ENCODE measurements at regions of chr22 and their contacts with region 1.

Region 1: DNA sequence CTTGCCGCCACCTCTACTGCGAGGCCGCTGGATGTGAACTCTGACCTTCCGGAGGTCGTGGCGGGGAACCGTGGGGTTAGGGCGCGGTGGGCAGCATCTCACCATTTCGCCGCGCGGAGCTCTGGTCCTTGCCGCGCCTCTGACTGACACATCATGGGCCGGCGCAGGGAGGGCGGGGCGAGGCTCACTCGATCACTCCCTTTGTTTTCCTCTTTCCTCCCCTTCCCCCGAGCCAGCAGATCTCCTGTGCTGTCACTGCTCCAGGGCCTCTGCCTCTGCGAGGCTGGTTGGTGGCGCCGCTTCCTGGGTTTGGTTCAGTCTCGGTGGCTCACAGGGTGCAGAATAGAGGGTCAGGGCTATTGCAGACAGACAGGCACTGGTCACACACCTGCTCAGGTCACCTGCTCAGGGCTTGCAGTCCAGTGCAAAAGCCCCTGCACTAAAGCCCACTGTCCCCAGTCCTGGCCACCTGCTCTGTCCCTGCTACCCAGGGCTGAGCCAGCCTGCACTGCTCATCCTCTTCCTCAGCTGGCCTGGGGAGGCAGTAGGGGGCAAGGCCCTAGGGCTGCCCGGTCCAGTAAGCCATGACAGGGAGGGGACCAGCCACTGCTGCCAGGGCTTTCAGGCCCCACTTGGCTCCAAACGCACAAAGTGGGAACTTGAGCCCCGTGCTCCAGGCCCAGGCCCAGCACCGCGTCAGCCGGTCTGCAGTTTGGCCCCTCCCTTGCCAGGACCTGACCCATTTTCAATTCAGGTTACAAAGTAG is 36.2 kb downstream of the PISD start:
- DNase-seq: peak in 1 of 6 donors; percentile 63
- ATAC-seq: peak in 1 of 4 donors; percentile 3
- H3K4me3 ChIP-seq: no peak overlapping the region
- H3K27ac ChIP-seq: peak overlapping the region in 1 of 4 donors; percentile 17
- H3K4me1 ChIP-seq: peaks cover 4 to 20% (median 17%) of the 10 kb centered on the region in 3 donors
- H3K27me3 ChIP-seq: no peaks in the 10 kb centered on the region
- CTCF ChIP-seq: no peak

Region 2: DNA sequence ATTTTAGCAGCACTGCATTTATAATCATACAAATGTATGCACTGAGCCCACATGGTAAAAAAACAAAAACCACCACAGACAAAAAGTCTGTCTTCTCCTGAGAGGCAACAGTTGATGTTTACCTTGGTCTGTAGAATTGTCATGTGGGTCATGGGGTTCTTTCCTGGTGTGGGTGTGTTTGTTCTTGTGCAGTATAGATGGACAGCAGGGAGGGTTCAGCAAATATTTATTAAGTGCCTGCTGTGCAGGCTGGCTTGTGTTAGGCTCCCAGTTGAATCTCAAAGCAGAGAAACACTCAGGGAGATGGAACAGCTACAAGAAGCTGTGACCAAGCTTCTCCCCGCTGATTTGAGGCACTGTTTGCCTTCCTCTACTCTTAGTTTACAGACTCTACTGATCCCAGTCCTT is 46.0 kb before region 1 on chr22:
- intact Hi-C with region 1: loop called in 1 of 3 experiments (anchors 10 kb)
- DNase-seq: no peak
- ATAC-seq: peak in 3 of 4 donors; percentile 77 to 86 (median 85)
- H3K4me3 ChIP-seq: no peak overlapping the region
- H3K27ac ChIP-seq: no peak overlapping the region
- H3K4me1 ChIP-seq: no peaks in the 10 kb centered on the region
- H3K27me3 ChIP-seq: no peaks in the 10 kb centered on the region
- CTCF ChIP-seq: no peak

Region 3: GRCh38 chr22:31891366-31892079 is 265.7 kb after region 1 on chr22:
- intact Hi-C with region 1: no loop called
- DNase-seq: no peak
- ATAC-seq: peak in 2 of 4 donors; percentile 38 to 72
- H3K4me3 ChIP-seq: no peak overlapping the region
- H3K27ac ChIP-seq: no peak overlapping the region
- H3K4me1 ChIP-seq: no peaks in the 10 kb centered on the region
- H3K27me3 ChIP-seq: no peaks in the 10 kb centered on the region
- CTCF ChIP-seq: no peak